ENCODE measurements at regions of chr10 and their contacts with region 1.

Region 1: GRCh38 chr10:89296220-89296648 is 5.6 kb upstream of the IFIT2 start:
- DNase-seq: peak in 2 of 14 experiments; percentile 42 to 46
- ATAC-seq: no peak
- H3K4me3 ChIP-seq: no peak overlapping the region
- H3K4me3 Mint-ChIP-seq: no peak overlapping the region
- H3K27ac ChIP-seq: no peak overlapping the region
- H3K27ac Mint-ChIP-seq: no peak overlapping the region
- H3K4me1 ChIP-seq: no peaks in the 10 kb centered on the region
- H3K4me1 Mint-ChIP-seq: peaks cover 30% of the 10 kb centered on the region
- H3K27me3 ChIP-seq: no peaks in the 10 kb centered on the region
- H3K27me3 Mint-ChIP-seq: no peaks in the 10 kb centered on the region
- CTCF ChIP-seq: no peak

Region 2: GRCh38 chr10:89369156-89370105 is 73.2 kb after region 1 on chr10:
- CTCF ChIA-PET with region 1: interaction called, 6 read pairs
- POLR2A ChIA-PET with region 1: interaction called, 12 read pairs
- intact Hi-C with region 1: loop called (anchors 2 to 5 kb)
- DNase-seq: peak in 5 of 14 experiments; percentile 8 to 55 (median 39)
- ATAC-seq: peak; percentile 46
- H3K4me3 ChIP-seq: no peak overlapping the region
- H3K4me3 Mint-ChIP-seq: no peak overlapping the region
- H3K27ac ChIP-seq: no peak overlapping the region
- H3K27ac Mint-ChIP-seq: no peak overlapping the region
- H3K4me1 ChIP-seq: peaks cover 7% of the 10 kb centered on the region
- H3K4me1 Mint-ChIP-seq: peaks cover 7% of the 10 kb centered on the region
- H3K27me3 ChIP-seq: no peaks in the 10 kb centered on the region
- H3K27me3 Mint-ChIP-seq: no peaks in the 10 kb centered on the region
- CTCF ChIP-seq: peak; percentile 58

Measured in CD4-positive, alpha-beta T cell (primary cell).